Transverse colon (tissue), 4 donors: ENCODE measurements at regions of chr10 and their contacts with region 1.

Region 1: GRCh38 chr10:80104066-80104926 is 25.8 kb downstream of the TMEM254 start:
- DNase-seq: no peak
- H3K4me3 ChIP-seq: no peak overlapping the region
- H3K27ac ChIP-seq: peak overlapping the region in 2 of 4 donors; percentile 3 to 31
- H3K4me1 ChIP-seq: no peaks in the 10 kb centered on the region
- H3K27me3 ChIP-seq: no peaks in the 10 kb centered on the region
- CTCF ChIP-seq: no peak
- EP300 ChIP-seq: no peak
- POLR2A ChIP-seq: no peak

Region 2: DNA sequence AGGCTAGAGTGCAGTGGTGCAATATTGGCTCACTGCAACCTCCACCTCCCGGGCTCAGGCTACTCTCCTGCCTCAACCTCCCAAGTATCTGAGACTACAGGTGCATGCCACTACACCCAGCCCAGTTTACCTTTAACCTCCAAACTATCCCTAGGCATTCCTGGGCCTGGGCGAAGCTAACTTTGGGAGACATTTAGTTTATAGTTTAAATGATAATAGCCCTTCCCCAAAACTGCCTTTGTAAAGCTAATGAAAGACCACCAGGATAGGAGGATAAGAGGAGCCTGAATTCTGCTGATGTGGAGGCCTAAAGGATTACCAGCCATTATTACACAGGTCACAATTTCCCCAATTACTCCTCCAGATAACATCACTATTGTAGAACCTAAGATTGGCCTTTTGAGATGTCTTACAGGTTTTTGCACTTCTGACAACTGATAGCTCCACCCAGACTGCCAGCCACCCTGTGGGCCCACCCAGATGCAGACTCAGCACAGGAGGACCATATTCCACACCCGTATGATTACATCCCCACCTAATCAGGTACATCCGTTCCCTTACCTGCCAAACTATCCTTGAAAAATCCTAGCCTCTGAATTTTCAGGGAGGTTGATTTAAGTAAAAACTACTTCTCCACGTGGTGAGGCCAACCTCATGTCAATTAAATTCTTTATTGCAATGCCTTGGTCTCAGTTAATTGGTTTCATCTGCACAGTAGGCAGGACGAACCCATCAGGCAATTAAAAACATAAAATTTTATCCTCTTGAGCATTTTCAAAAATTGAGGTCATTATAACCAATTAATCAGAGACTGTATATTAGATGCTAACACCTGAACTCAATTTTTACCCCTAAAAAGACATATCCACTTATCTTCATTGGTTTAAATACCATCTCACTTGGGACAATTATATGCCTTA is 88.1 kb before region 1 on chr10:
- in situ Hi-C with region 1: loop called in 1 of 4 experiments (anchors 25 kb)
- intact Hi-C with region 1: no loop called
- DNase-seq: no peak
- H3K4me3 ChIP-seq: no peak overlapping the region
- H3K27ac ChIP-seq: no peak overlapping the region
- H3K4me1 ChIP-seq: no peaks in the 10 kb centered on the region
- H3K27me3 ChIP-seq: no peaks in the 10 kb centered on the region
- CTCF ChIP-seq: no peak
- EP300 ChIP-seq: no peak
- POLR2A ChIP-seq: no peak

Region 3: DNA sequence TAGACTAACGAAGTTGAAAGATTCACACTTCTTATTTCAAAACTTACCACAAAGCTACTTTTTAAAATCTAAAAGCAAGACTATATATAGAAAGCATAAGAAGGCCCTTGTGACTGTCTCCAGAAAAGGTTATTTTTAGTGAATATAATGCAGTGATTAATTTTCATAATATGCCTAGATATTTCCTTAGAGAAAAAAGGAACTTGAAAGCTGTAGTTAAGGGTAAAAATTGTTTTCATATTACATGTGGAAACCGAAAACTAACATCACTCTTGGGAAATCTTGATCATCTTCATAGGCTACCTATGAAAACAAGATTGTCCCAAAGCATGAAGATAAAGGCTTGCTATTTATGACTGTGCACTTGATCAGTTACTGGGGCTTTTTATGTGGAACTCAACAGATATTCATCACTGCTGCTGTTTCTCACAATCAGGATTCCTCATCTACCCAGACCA is 656.6 kb after region 1 on chr10:
- in situ Hi-C with region 1: no loop called
- intact Hi-C with region 1: no loop called
- DNase-seq: no peak
- H3K4me3 ChIP-seq: no peak overlapping the region
- H3K27ac ChIP-seq: no peak overlapping the region
- H3K4me1 ChIP-seq: no peaks in the 10 kb centered on the region
- H3K27me3 ChIP-seq: no peaks in the 10 kb centered on the region
- CTCF ChIP-seq: no peak
- EP300 ChIP-seq: no peak
- POLR2A ChIP-seq: no peak